Heart right ventricle (tissue), 16 donors: ENCODE measurements at regions of chr10 and their contacts with region 1.

Region 1: DNA sequence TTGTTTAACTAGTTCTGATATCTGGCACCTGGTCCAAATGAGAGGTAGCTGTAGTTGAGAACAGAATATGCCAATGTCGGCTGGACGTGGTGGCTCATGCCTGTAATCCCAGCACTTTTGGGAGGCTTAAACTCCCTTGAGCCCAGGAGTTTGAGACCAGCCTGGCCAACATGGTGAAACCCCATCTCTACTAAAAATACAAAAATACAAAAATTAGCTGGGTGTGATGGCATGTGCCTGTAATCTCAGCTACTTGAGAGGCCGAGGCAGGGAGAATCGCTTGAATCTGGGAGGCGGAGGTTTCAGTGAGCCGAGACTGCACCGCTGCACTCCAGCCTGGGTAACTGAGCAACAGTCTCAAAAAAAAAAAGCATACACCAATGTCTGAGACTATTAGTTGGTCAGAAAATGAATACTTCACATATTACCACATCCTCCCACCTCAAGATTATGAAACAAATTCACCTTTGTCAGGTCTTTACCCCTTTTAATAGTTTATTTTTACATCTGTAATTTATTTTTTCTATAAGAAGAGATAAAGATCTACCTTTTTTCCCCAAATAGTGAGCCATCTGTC is 38.8 kb downstream of the EPC1 start:
- DNase-seq: no peak
- ATAC-seq: peak in 1 of 8 donors; percentile 18
- H3K4me3 ChIP-seq: no peak overlapping the region
- H3K27ac ChIP-seq: peak overlapping the region in 1 of 10 donors; percentile 29
- H3K4me1 ChIP-seq: peaks cover 4 to 71% (median 43%) of the 10 kb centered on the region in 9 donors
- H3K27me3 ChIP-seq: no peaks in the 10 kb centered on the region
- CTCF ChIP-seq: no peak

Region 2: GRCh38 chr10:32271617-32272016 is 36.5 kb before region 1 on chr10:
- intact Hi-C with region 1: loop called in 1 of 10 experiments (anchors 5 kb)
- DNase-seq: no peak
- ATAC-seq: no peak
- H3K4me3 ChIP-seq: no peak overlapping the region
- H3K27ac ChIP-seq: no peak overlapping the region
- H3K4me1 ChIP-seq: peaks cover 0 to 16% (median 0%) of the 10 kb centered on the region in 9 donors
- H3K27me3 ChIP-seq: no peaks in the 10 kb centered on the region
- CTCF ChIP-seq: no peak